Motor neuron (in vitro differentiated cells): ENCODE measurements at regions of chr2 and their contacts with region 1.

Region 1: GRCh38 chr2:19235308-19235707 is 123.1 kb downstream of the OSR1 start:
- ATAC-seq: peak in 3 of 8 experiments; percentile 63 to 90 (median 88)
- H3K4me3 ChIP-seq: no peak overlapping the region
- H3K27ac ChIP-seq: no peak overlapping the region
- H3K4me1 ChIP-seq: no peaks in the 10 kb centered on the region

Region 2: GRCh38 chr2:18932853-18933252 is 302.5 kb before region 1 on chr2:
- in situ Hi-C with region 1: no loop called
- ATAC-seq: peak in 3 of 8 experiments; percentile 16 to 70 (median 29)
- H3K4me3 ChIP-seq: no peak overlapping the region
- H3K27ac ChIP-seq: no peak overlapping the region
- H3K4me1 ChIP-seq: no peaks in the 10 kb centered on the region

Region 3: DNA sequence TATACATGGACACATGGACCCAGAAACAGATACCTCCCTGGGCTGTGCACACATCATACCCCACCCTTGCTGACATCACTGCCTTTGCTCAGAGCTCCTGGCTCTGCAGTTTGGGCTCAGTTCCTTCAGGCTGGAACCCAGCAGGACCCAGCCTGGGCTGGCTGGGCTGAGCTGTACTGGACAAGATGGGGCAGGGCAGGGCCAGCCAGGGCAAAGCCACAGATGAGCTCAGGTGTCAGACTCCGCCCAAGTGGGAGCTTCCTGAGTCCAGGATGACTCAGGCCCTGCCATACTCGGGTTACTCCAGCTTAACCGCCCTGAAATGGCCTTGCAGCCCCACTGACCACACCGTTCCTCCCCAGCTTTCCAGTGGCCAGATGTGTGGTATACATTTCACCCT is 161.8 kb before region 1 on chr2:
- in situ Hi-C with region 1: no loop called
- ATAC-seq: peak in 4 of 8 experiments; percentile 40 to 97 (median 88)
- H3K4me3 ChIP-seq: no peak overlapping the region
- H3K27ac ChIP-seq: no peak overlapping the region
- H3K4me1 ChIP-seq: no peaks in the 10 kb centered on the region

Region 4: GRCh38 chr2:19347619-19348562 is 112.6 kb after region 1 on chr2:
- in situ Hi-C with region 1: loop called in 1 of 9 experiments (anchors 25 kb)
- ATAC-seq: peak; percentile 87 to 94 (median 92)
- H3K4me3 ChIP-seq: peak overlapping the region; percentile 59 to 83 (median 76)
- H3K27ac ChIP-seq: peak overlapping the region; percentile 82 to 83
- H3K4me1 ChIP-seq: peaks cover 4 to 20% of the 10 kb centered on the region in 2 donors

Region 5: DNA sequence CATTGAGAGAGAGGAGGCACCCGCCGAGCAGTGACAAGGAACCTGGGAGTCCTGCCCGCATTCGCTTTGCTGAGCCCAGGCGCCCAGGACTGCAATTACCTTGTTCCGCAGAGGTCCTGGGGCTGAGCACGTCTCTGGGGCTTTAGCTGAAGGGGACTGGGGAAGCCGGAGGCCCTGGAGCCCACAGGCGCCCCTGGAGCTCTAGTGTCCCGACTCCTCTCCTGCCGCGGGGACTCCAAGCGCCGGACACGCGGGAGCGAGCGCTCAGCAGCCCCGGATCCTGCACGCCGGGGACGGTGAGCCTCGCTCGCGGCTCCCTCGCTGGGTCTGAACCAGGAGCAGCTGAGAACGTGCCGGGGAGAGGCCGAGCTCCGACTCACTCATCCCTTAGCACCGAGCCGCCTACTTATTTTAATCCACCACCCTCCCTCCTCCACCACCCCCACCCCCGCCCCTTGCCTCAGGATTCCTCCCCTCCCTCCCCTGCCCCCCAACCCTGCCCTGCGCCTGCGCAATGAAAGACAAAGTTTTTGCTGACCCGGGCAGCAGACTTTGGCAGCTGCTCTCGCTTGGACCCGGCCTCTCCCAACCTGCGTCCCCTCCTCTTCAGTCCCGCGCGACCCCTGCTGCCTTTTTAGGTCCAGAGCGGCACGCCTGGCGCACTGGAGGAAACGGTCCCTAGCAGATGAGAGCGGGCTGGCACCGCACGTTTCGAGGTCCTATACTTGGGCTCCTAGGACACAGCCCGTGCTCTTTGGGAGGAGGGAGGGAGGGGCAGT is 123.1 kb after region 1 on chr2 and contains the start of gene OSR1:
- in situ Hi-C with region 1: no loop called
- ATAC-seq: peak; percentile 47 to 77 (median 72)
- H3K4me3 ChIP-seq: peak within 1 kb of the TSS; percentile 14 to 33 (median 23)
- H3K27ac ChIP-seq: no peak within 1 kb of the TSS
- H3K4me1 ChIP-seq: peaks cover 9 to 14% of the 10 kb centered on the region in 2 donors
- total RNA-seq, gene OSR1: 0.27 to 25.8 (median 6.9) TPM

Region 6: DNA sequence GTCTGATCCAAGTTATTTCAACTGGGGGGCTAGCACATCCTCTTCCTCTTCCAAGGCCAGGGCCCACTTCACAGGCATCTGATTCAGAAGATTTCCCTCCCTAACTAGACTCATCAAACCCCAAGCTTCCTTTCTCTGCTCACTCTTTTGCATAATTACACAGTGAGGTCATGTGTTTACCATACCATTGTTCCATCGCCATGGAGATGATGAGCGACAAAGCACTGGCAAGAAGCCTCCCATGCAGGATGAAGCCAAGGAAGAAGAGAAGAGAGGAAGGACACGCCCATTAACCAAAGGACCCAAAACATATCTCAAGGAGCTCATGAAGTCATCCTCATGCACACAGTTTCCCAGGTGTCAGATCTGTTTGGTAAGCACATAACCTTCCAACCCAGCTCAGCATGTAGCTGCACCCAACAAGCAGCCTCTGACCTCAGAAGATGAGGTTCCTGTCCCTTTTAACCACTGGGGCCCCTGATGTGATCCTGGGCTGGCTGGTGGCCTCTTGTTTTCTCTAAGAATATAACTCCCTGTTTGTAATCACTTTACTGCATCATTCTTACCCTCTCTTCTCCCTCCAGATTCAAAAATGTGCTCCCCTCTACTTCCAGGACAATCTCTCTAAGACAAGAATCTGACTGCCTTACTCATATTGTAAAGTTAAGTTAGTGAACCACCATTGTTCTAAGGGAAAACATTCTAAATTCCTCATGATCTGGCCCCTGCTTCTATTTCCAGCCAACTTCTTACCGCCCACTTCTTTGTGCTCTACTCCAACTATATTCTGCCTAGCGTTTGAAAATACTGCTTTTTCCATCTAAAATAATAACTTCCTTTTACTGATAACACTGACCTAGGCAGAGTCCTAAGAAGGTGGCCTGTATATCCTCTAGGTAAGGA is 476.4 kb after region 1 on chr2:
- in situ Hi-C with region 1: no loop called
- ATAC-seq: peak; percentile 79 to 100 (median 91)
- H3K4me3 ChIP-seq: no peak overlapping the region
- H3K27ac ChIP-seq: no peak overlapping the region
- H3K4me1 ChIP-seq: peaks cover 0 to 3% of the 10 kb centered on the region in 2 donors